ENCODE measurements at regions of chr3 and their contacts with region 1.

Region 1: GRCh38 chr3:98039322-98040024 is 4.4 kb upstream of the GABRR3 start:
- DNase-seq: peak; percentile 79
- ATAC-seq: peak; percentile 97
- H3K4me3 ChIP-seq: peak overlapping the region; percentile 66; the same call in 1 of the 2 replicates
- H3K27ac ChIP-seq: no peak overlapping the region
- H3K4me1 ChIP-seq: no peaks in the 10 kb centered on the region
- H3K27me3 ChIP-seq: no peaks in the 10 kb centered on the region; a peak in 1 of 4 replicates
- CTCF ChIP-seq: peak; percentile 61 to 95 (median 67)
- EP300 ChIP-seq: no peak
- POLR2A ChIP-seq: no peak
- RAD21 ChIP-seq: peak; percentile 86

Region 2: DNA sequence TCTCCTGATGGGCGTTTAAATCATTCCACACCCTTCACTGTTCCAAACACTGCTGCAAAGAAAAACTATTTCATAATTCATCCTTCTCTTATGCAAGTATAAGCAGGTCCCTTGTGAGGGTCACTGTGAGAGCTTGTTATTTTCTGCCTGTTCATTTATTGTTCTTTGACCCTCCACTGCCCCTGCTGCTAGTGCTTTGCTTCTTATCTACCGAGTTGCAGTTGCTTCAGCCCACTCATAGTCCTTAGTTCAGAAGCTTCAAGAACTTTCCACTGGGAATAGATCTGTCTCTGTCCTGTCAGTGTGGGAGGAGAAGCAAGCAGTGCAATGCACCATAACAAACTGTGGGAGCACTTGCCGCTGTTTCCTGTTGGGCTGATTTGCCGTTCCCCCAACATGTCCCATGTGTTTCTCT is 107.1 kb before region 1 on chr3:
- CTCF ChIA-PET with region 1: no interaction called
- POLR2A ChIA-PET with region 1: no interaction called
- RAD21 ChIA-PET with region 1: no interaction called
- SMC1A ChIA-PET with region 1: no interaction called
- in situ Hi-C with region 1: no loop called
- intact Hi-C with region 1: no loop called
- DNase-seq: no peak
- ATAC-seq: no peak
- H3K4me3 ChIP-seq: no peak overlapping the region
- H3K27ac ChIP-seq: no peak overlapping the region
- H3K4me1 ChIP-seq: no peaks in the 10 kb centered on the region
- H3K27me3 ChIP-seq: no peaks in the 10 kb centered on the region
- CTCF ChIP-seq: no peak
- EP300 ChIP-seq: no peak
- POLR2A ChIP-seq: no peak
- RAD21 ChIP-seq: no peak

Region 3: DNA sequence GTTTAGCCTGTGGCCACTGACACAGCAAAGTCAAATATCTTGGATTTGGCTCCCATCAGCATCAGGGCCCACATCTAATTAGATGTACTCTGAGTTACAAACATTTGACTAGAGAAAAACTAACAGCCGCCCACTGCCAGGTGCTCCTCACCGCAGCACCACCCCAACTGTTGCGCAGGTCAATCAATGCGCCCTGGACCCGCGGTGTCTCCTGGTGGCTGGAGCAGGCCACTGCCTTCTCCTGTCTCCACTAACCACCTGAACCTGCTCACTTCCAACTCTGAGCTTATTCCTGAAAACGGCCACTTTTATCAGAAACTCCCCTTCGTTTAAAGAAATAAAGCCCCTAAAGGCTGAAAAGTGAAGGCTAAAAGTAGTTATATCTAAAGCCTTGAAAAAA is 71.5 kb before region 1 on chr3:
- CTCF ChIA-PET with region 1: no interaction called
- POLR2A ChIA-PET with region 1: no interaction called
- RAD21 ChIA-PET with region 1: no interaction called
- SMC1A ChIA-PET with region 1: no interaction called
- in situ Hi-C with region 1: no loop called
- intact Hi-C with region 1: no loop called
- DNase-seq: no peak
- ATAC-seq: no peak
- H3K4me3 ChIP-seq: no peak overlapping the region
- H3K27ac ChIP-seq: no peak overlapping the region
- H3K4me1 ChIP-seq: no peaks in the 10 kb centered on the region
- H3K27me3 ChIP-seq: no peaks in the 10 kb centered on the region
- CTCF ChIP-seq: 0 out of 6 replicates have a peak, but pooled peaks of 1 of the 3 experiments have one; percentile 8
- EP300 ChIP-seq: no peak
- POLR2A ChIP-seq: no peak
- RAD21 ChIP-seq: no peak

Region 4: DNA sequence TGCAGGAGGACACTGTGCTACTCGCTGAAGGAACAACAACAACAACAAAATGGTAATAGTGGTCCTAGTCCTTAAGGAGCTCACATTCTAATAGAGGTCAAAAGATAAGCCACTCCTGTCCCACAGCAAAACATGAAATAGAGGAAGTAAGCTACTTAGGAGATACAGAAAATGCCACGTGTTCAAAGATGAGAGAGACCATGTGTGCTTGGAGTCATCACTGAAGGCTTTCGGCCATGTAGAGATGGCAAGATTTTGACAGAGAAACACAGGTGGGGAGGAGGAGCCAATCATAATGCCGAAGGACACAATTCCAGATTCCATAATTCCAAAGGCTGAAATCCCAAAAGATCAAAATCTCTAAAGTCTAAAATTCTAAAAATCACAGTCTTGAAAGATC is 42.5 kb before region 1 on chr3:
- CTCF ChIA-PET with region 1: no interaction called
- POLR2A ChIA-PET with region 1: no interaction called
- RAD21 ChIA-PET with region 1: no interaction called
- SMC1A ChIA-PET with region 1: no interaction called
- in situ Hi-C with region 1: no loop called
- intact Hi-C with region 1: no loop called
- DNase-seq: no peak
- ATAC-seq: 0 out of 3 replicates have a peak, but pooled peaks have one; percentile 24
- H3K4me3 ChIP-seq: no peak overlapping the region
- H3K27ac ChIP-seq: no peak overlapping the region
- H3K4me1 ChIP-seq: no peaks in the 10 kb centered on the region
- H3K27me3 ChIP-seq: no peaks in the 10 kb centered on the region
- CTCF ChIP-seq: no peak
- EP300 ChIP-seq: no peak
- POLR2A ChIP-seq: no peak
- RAD21 ChIP-seq: no peak

Region 5: DNA sequence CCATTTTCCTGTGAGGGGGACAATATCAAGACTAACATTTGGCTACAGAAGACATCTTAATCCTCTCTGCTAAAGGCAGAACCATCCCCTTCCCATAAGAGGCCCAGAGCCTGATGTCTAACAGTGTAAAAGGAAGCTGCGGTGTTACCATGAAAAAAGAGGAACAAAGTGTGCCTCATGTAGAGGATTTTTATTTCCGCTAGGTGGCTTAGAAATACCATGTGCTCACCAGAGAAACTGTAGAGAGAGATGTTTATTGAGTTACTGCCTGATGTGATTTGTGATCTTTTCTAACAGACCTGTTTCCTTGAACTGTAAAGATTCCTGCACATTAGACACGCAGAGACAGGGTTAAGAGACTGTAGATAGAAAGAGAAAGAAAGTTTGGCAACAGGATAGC is 149.1 kb after region 1 on chr3:
- CTCF ChIA-PET with region 1: interaction called, 58 read pairs
- POLR2A ChIA-PET with region 1: no interaction called
- RAD21 ChIA-PET with region 1: interaction called, 6 read pairs
- SMC1A ChIA-PET with region 1: interaction called, 22 read pairs
- in situ Hi-C with region 1: no loop called
- intact Hi-C with region 1: loop called (anchors 1 kb)
- DNase-seq: peak; percentile 53
- ATAC-seq: peak; percentile 99
- H3K4me3 ChIP-seq: no peak overlapping the region
- H3K27ac ChIP-seq: no peak overlapping the region
- H3K4me1 ChIP-seq: no peaks in the 10 kb centered on the region
- H3K27me3 ChIP-seq: no peaks in the 10 kb centered on the region; a peak in 1 of 4 replicates
- CTCF ChIP-seq: peak; percentile 55 to 68 (median 68)
- EP300 ChIP-seq: no peak
- POLR2A ChIP-seq: no peak
- RAD21 ChIP-seq: peak; percentile 66

Region 6: GRCh38 chr3:98343647-98344507 is 304.4 kb after region 1 on chr3:
- CTCF ChIA-PET with region 1: interaction called, 44 read pairs
- POLR2A ChIA-PET with region 1: no interaction called
- RAD21 ChIA-PET with region 1: interaction called, 24 read pairs
- SMC1A ChIA-PET with region 1: interaction called, 14 read pairs
- in situ Hi-C with region 1: no loop called
- intact Hi-C with region 1: loop called (anchors 1 kb)
- DNase-seq: no peak
- ATAC-seq: peak; percentile 92
- H3K4me3 ChIP-seq: no peak overlapping the region
- H3K27ac ChIP-seq: no peak overlapping the region
- H3K4me1 ChIP-seq: no peaks in the 10 kb centered on the region
- H3K27me3 ChIP-seq: no peaks in the 10 kb centered on the region
- CTCF ChIP-seq: peak; percentile 70 to 84 (median 80)
- EP300 ChIP-seq: no peak
- POLR2A ChIP-seq: no peak
- RAD21 ChIP-seq: peak; percentile 67

Region 7: GRCh38 chr3:98513091-98513511 is 473.6 kb after region 1 on chr3:
- CTCF ChIA-PET with region 1: no interaction called
- POLR2A ChIA-PET with region 1: no interaction called
- RAD21 ChIA-PET with region 1: no interaction called
- SMC1A ChIA-PET with region 1: interaction called, 3 read pairs
- in situ Hi-C with region 1: loop called (anchors 10 kb)
- intact Hi-C with region 1: no loop called
- DNase-seq: no peak
- ATAC-seq: no peak
- H3K4me3 ChIP-seq: no peak overlapping the region
- H3K27ac ChIP-seq: no peak overlapping the region
- H3K4me1 ChIP-seq: no peaks in the 10 kb centered on the region
- H3K27me3 ChIP-seq: no peaks in the 10 kb centered on the region
- CTCF ChIP-seq: no peak
- EP300 ChIP-seq: no peak
- POLR2A ChIP-seq: no peak
- RAD21 ChIP-seq: no peak

Region 8: DNA sequence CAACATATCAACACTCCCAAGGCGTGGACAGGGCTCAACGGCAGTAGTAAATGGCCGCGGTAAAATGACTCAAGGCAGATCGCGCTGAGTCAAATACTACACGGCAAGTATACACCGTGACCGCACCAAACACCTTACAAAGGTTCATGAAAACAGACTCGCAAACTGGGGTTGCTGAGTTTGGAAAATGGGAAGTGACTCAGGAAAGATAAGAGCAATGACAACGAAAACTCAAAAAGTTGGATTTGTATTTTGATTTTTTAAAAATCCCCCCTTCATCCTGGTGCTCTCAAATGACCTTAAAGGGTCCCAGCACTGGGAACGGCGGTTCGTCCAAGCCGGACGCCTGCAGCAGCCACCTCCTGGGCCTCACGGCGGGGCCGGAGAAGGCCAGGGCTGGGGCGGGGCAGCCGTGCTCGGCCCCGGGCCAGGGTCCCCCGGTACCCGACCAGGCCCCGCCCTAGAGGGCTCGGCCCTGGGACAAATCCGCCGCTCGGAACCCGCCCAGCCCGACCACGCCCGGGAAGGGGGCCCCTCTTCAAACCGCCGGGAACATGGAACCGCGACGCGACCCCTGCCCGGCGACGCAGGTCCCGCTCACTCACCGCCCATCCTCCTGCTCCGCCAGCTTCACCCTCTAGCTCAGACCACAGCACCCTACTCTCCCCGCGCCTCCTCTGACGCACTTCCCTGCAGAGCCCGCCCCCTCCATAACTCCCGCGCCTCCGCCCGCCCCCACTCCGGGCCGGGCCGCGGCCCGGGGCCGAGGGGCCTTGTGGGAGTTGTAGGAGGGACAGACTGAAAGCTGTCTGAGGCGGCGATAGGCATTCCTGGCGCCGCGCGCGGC is 483.0 kb after region 1 on chr3 and contains the start of gene CLDND1:
- CTCF ChIA-PET with region 1: interaction called, 5 read pairs
- POLR2A ChIA-PET with region 1: no interaction called
- RAD21 ChIA-PET with region 1: no interaction called
- SMC1A ChIA-PET with region 1: interaction called, 4 read pairs
- in situ Hi-C with region 1: loop called (anchors 10 kb)
- intact Hi-C with region 1: loop called (anchors 2 kb)
- DNase-seq: peak; percentile 88
- ATAC-seq: peak; percentile 86
- H3K4me3 ChIP-seq: peak within 1 kb of the TSS; percentile 82
- H3K27ac ChIP-seq: peak within 1 kb of the TSS; percentile 85
- H3K4me1 ChIP-seq: peaks cover 13% of the 10 kb centered on the region; the same call in 1 of the 2 replicates
- H3K27me3 ChIP-seq: no peaks in the 10 kb centered on the region
- CTCF ChIP-seq: no peak
- EP300 ChIP-seq: no peak
- POLR2A ChIP-seq: peak; percentile 94
- RAD21 ChIP-seq: no peak
- polyA plus RNA-seq, gene CLDND1: 150 to 163 TPM